ENCODE measurements at regions of chr12 and their contacts with region 1.

Region 1: GRCh38 chr12:127761880-127762279 is 505.1 kb upstream of the TMEM132C start:
- DNase-seq: peak in 8 of 10 donors; percentile 42 to 85 (median 66)

Region 2: DNA sequence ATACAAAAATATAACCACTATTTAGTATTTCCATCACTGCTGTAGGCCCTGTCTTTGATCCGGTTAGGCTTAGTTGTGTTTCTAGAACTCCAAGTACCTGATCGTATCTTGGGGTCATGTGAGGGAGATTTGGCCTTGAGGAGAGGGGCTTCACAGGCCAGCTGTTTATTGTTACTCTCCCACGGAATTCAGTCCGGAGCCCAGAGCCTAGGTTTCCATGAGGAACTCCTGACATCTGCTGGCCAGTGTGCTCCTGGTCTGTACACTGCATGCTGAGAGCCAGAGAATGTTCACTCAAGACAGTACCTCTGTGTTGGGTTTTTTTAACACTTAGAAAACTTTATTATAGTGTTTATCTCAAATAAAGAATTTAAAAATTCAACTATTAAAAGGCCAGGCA is 164.1 kb after region 1 on chr12:
- intact Hi-C with region 1: loop called (anchors 10 kb)
- DNase-seq: peak; percentile 22 to 94 (median 66)